Esophagus squamous epithelium (tissue), 5 donors: ENCODE measurements at regions of chr17 and their contacts with region 1.

Region 1: GRCh38 chr17:45021607-45022287 is 29.7 kb downstream of the DCAKD start:
- DNase-seq: no peak
- H3K4me3 ChIP-seq: peak overlapping the region; percentile 30 to 64 (median 41)
- H3K27ac ChIP-seq: peak overlapping the region; percentile 67 to 90 (median 80)
- H3K4me1 ChIP-seq: peaks cover 32 to 58% (median 36%) of the 10 kb centered on the region in 3 donors
- H3K27me3 ChIP-seq: peaks cover 0 to 12% (median 0%) of the 10 kb centered on the region in 4 donors
- CTCF ChIP-seq: peak; percentile 73 to 98 (median 94)
- POLR2A ChIP-seq: no peak

Region 2: GRCh38 chr17:44919885-44920564 is 101.7 kb before region 1 on chr17:
- intact Hi-C with region 1: loop called (anchors 5 kb)
- DNase-seq: peak; percentile 25
- H3K4me3 ChIP-seq: no peak overlapping the region
- H3K27ac ChIP-seq: no peak overlapping the region
- H3K4me1 ChIP-seq: peaks cover 21 to 47% (median 27%) of the 10 kb centered on the region in 3 donors
- H3K27me3 ChIP-seq: no peaks in the 10 kb centered on the region
- CTCF ChIP-seq: peak; percentile 52 to 87 (median 82)
- POLR2A ChIP-seq: no peak

Region 3: GRCh38 chr17:44932496-44933097 is 89.2 kb before region 1 on chr17:
- intact Hi-C with region 1: loop called (anchors 5 kb)
- DNase-seq: no peak
- H3K4me3 ChIP-seq: no peak overlapping the region
- H3K27ac ChIP-seq: no peak overlapping the region
- H3K4me1 ChIP-seq: no peaks in the 10 kb centered on the region
- H3K27me3 ChIP-seq: no peaks in the 10 kb centered on the region
- CTCF ChIP-seq: no peak
- POLR2A ChIP-seq: no peak

Region 4: GRCh38 chr17:45077643-45078042 is 55.9 kb after region 1 on chr17:
- intact Hi-C with region 1: no loop called
- DNase-seq: no peak
- H3K4me3 ChIP-seq: no peak overlapping the region
- H3K27ac ChIP-seq: peak overlapping the region in 3 of 4 donors; percentile 70 to 89 (median 87)
- H3K4me1 ChIP-seq: peaks cover 15 to 87% (median 44%) of the 10 kb centered on the region in 3 donors
- H3K27me3 ChIP-seq: no peaks in the 10 kb centered on the region
- CTCF ChIP-seq: no peak
- POLR2A ChIP-seq: no peak